Transverse colon (tissue), 4 donors: ENCODE measurements at regions of chrX and their contacts with region 1.

Region 1: GRCh38 chrX:102959471-102959870 is 22.4 kb downstream of the RAB40AL start:
- DNase-seq: no peak
- H3K4me3 ChIP-seq: no peak overlapping the region
- H3K27ac ChIP-seq: no peak overlapping the region
- H3K4me1 ChIP-seq: no peaks in the 10 kb centered on the region
- H3K27me3 ChIP-seq: no peaks in the 10 kb centered on the region
- CTCF ChIP-seq: no peak
- EP300 ChIP-seq: no peak
- POLR2A ChIP-seq: no peak

Region 2: GRCh38 chrX:102610905-102611304 is 348.6 kb before region 1 on chrX:
- in situ Hi-C with region 1: no loop called
- intact Hi-C with region 1: no loop called
- DNase-seq: no peak
- H3K4me3 ChIP-seq: no peak overlapping the region
- H3K27ac ChIP-seq: no peak overlapping the region
- H3K4me1 ChIP-seq: no peaks in the 10 kb centered on the region
- H3K27me3 ChIP-seq: no peaks in the 10 kb centered on the region
- CTCF ChIP-seq: no peak
- EP300 ChIP-seq: no peak
- POLR2A ChIP-seq: no peak

Region 3: GRCh38 chrX:103183912-103184311 is 224.4 kb after region 1 on chrX:
- in situ Hi-C with region 1: loop called in 1 of 4 experiments (anchors 25 kb)
- intact Hi-C with region 1: loop called (anchors 1 kb)
- DNase-seq: no peak
- H3K4me3 ChIP-seq: no peak overlapping the region
- H3K27ac ChIP-seq: no peak overlapping the region
- H3K4me1 ChIP-seq: no peaks in the 10 kb centered on the region
- H3K27me3 ChIP-seq: no peaks in the 10 kb centered on the region
- CTCF ChIP-seq: no peak
- EP300 ChIP-seq: no peak
- POLR2A ChIP-seq: no peak